ENCODE measurements at regions of chr2 and their contacts with region 1.

Region 1: DNA sequence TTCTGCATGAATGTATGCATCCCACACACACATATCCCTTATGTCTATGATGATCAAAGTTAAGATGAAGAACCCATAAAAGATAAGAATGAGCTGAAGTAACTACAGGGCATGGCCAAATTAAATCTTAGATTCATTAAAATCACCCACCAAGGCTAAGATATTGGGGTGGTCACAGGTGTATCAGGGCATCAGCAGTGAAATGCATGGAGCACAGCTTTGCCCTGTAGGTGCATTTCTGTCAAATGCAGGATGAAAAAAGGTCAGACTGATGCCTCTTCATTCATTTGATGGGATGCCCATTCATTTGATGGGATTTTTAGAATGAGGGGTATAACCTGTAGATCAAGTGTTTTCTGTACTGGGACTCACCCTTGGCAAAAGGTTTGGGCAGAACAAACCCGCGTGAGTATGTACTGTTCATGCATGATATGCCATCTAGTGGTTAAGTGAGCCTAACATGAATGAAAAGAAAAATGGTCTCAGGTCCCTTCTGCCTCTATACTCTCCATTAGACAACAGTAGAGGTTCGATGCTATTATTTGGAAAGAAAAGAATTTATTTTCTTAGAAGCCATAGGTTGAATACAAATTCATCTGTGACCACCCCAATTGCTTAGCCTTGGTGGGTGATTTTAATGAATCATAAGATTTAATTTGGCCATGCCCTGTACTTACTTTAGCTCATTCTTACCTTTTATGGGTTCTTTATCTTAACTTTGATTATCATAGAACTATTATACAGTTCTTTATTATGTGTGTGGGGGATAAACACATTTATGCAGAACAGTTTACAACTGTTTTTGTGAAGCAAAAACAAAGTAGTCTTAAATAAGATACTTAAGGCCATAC is 43.2 kb upstream of the NOSTRIN start:
- DNase-seq: peak; percentile 67
- H3K4me3 Mint-ChIP-seq: no peak overlapping the region
- H3K27ac Mint-ChIP-seq: no peak overlapping the region
- H3K4me1 Mint-ChIP-seq: no peaks in the 10 kb centered on the region
- H3K27me3 Mint-ChIP-seq: no peaks in the 10 kb centered on the region
- CTCF ChIP-seq: peak; percentile 62

Region 2: GRCh38 chr2:168136392-168136977 is 622.7 kb before region 1 on chr2:
- CTCF ChIA-PET with region 1: no interaction called
- POLR2A ChIA-PET with region 1: no interaction called
- intact Hi-C with region 1: loop called (anchors 10 kb)
- DNase-seq: peak; percentile 49
- H3K4me3 Mint-ChIP-seq: no peak overlapping the region
- H3K27ac Mint-ChIP-seq: no peak overlapping the region
- H3K4me1 Mint-ChIP-seq: peaks cover 10% of the 10 kb centered on the region
- H3K27me3 Mint-ChIP-seq: no peaks in the 10 kb centered on the region
- CTCF ChIP-seq: peak; percentile 54

Region 3: DNA sequence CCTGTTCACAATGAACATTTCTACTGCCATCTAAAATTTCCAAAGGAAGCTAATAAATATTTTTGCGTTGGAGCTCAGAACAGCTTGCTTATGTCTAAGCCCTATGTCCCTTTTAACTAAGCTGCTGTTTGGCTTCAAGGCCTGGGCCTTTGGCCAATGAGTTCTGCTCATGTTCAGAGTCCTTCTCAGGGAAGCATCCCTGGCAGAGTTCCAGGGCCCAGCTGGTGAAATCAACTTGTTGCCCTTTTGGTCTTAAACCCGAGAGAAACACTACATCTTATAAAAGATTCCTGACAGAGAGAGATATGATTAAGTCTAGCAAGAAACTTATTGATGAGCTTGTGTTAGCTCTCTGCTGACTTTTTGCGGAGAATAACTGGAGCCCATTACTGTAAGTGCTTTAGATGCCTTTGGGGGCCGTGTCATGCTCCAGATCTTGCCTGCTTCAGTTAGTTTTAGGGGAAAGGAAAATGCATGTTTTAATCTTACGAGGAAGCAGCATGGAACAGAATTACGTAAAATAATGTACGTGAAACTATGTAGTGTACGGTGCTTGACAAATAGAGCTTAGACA is 59.3 kb before region 1 on chr2:
- CTCF ChIA-PET with region 1: interaction called, 3 read pairs
- POLR2A ChIA-PET with region 1: no interaction called
- intact Hi-C with region 1: loop called (anchors 2 kb)
- DNase-seq: peak; percentile 43
- H3K4me3 Mint-ChIP-seq: no peak overlapping the region
- H3K27ac Mint-ChIP-seq: no peak overlapping the region
- H3K4me1 Mint-ChIP-seq: peaks cover 18% of the 10 kb centered on the region
- H3K27me3 Mint-ChIP-seq: no peaks in the 10 kb centered on the region
- CTCF ChIP-seq: no peak

Region 4: DNA sequence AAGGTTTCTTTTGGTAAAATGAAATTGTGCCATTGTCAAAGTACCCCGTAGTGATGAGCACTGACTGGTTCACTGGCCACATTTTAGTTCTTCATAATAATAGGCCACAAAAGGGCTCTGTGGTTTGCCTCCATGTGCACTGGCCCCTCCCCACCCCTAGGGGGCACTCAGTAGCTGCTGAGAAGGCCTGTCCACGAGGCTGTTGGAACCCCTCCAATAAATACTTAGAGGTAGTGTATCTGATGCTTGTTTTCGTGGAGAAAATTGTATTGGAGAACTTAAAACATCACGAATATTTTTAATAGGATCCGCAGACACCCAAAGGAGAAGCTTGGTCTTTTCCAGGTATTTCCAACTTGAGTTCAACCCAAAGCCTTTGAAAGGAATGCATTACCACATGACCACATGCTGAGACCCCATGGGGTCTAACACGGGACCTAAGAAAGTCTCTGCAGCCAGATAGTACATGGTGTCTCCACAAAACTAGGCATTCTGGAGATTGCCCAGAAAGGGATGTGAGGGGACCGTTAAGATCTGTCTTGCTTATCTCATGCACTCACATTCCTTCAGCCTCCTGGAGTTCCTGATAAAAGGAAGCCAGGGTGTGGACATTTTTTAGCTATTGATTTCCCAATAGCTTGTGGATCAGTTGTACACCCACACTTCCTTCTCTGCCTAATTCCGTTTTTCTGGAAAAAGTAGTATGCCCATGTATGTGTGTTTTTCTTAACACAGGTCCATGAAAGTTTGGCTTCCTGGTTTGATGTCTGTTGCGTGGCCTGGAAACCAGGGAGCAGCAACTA is 14.7 kb after region 1 on chr2:
- CTCF ChIA-PET with region 1: interaction called, 10 read pairs
- POLR2A ChIA-PET with region 1: no interaction called
- intact Hi-C with region 1: no loop called
- DNase-seq: peak; percentile 79
- H3K4me3 Mint-ChIP-seq: no peak overlapping the region
- H3K27ac Mint-ChIP-seq: no peak overlapping the region
- H3K4me1 Mint-ChIP-seq: no peaks in the 10 kb centered on the region
- H3K27me3 Mint-ChIP-seq: no peaks in the 10 kb centered on the region
- CTCF ChIP-seq: peak; percentile 72

Region 5: GRCh38 chr2:168849610-168850009 is 90.4 kb after region 1 on chr2:
- CTCF ChIA-PET with region 1: no interaction called
- POLR2A ChIA-PET with region 1: no interaction called
- intact Hi-C with region 1: no loop called
- DNase-seq: peak; percentile 18
- H3K4me3 Mint-ChIP-seq: no peak overlapping the region
- H3K27ac Mint-ChIP-seq: no peak overlapping the region
- H3K4me1 Mint-ChIP-seq: peaks cover 7% of the 10 kb centered on the region
- H3K27me3 Mint-ChIP-seq: no peaks in the 10 kb centered on the region
- CTCF ChIP-seq: no peak

Region 6: DNA sequence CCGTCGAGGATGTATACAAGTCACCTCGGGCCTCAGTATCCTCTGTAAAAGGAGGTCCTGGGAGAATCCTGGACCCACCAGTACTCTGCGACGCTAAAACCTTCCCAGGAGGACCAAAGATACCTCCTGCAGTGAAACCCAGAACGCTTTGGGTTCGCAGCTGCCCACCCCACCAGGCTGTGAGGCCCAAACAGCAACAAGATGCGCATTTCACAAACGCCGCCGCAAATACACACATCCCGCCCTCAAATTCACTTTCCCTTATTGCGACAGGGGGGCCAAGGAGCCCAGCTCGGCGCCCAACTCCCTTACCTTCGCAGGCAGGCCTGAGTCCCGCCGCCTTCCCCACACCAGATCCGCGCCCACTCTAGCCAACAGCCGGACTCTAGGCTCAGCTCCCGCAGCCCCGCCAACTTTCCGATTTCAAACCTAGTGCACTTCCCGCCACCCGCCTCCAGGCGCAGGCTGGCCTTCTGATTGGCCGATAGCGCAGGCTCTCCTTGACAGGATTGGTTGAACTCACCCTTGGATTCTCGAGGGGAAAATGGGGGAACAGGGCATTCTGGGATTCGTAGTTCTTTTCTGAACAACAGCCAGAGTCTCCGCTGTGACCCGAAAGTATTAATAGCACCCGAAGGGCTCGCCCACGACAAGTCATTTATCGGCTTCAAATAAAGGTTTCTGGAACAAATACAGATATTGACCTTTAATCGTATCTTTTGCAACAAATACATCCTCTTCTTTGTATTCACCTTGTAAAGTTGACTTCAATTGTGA is 131.0 kb after region 1 on chr2 and contains the start of gene SPC25:
- CTCF ChIA-PET with region 1: no interaction called
- POLR2A ChIA-PET with region 1: no interaction called
- intact Hi-C with region 1: no loop called
- DNase-seq: peak; percentile 95
- H3K4me3 Mint-ChIP-seq: peak within 1 kb of the TSS; percentile 89
- H3K27ac Mint-ChIP-seq: peak within 1 kb of the TSS; percentile 52
- H3K4me1 Mint-ChIP-seq: peaks cover 11% of the 10 kb centered on the region
- H3K27me3 Mint-ChIP-seq: peaks cover 34% of the 10 kb centered on the region
- CTCF ChIP-seq: no peak
- total RNA-seq, gene SPC25: 2.5 and 3.5 TPM in 2 replicates

Region 7: DNA sequence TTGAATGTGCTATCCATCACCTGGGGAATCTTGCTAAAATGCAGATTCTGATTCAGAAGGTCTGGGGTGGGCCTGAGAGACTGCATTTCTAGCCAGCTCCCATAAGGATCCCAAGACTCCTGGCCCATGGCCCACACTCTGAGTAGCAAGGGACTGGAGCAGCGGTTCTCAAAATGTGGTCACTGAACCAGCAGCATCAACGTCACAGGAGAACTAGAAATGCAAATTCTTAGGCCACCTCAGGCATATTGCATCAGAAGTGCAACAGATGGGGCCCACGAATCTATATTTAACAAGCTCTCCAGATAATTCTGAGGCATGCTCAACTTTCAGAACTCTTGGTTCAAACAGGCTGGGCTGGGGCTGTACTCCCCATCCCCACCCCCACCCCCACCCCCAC is 384.8 kb after region 1 on chr2:
- CTCF ChIA-PET with region 1: no interaction called
- POLR2A ChIA-PET with region 1: no interaction called
- intact Hi-C with region 1: no loop called
- DNase-seq: no peak
- H3K4me3 Mint-ChIP-seq: no peak overlapping the region
- H3K27ac Mint-ChIP-seq: no peak overlapping the region
- H3K4me1 Mint-ChIP-seq: no peaks in the 10 kb centered on the region
- H3K27me3 Mint-ChIP-seq: no peaks in the 10 kb centered on the region
- CTCF ChIP-seq: no peak

Measured in MCF 10A (cell line).